HepG2 (cell line): ENCODE measurements at regions of chr17 and their contacts with region 1.

Region 1: DNA sequence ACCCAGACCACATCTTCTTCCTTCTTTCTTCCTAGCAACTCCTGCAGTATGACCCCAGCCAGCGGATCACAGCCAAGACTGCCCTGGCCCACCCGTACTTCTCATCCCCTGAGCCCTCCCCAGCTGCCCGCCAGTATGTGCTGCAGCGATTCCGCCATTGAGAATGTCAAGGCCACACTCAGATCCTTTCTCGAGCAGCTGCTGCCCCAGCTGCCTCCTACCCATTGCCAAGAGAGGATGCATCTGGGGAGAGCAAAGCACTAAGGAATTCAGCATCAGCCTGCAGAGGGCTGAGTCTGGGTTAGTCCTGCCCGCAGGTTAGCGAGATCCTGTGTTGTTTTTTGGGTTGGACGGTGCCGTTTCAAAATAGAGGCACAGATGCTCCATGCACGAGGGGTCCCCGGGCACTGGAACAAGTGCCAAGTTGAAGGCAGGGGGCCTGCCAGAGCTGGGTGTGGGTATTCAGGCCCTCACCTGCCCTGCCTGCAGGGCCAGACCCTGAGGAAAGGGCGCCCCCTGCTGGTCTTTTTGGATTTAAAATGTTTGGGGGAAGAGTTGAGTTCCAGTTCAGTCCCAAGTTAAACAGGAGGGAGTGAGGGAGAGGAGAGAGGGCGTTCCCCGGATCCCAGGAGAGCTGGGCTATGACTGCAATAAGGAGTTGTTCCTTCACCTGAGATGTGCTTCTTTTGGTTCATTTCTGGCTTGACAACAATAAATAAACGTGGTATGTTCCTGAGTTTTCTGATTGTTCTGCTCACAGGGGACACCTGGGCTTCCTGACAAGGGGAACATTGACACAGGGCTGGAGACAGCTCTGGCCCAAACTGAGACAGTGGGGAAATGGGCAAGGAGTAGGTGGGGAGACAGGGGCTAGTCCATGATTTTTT is 4.9 kb downstream of the CDK3 start:
- DNase-seq: peak; percentile 82
- ATAC-seq: peak; percentile 42
- H3K4me3 ChIP-seq: no peak overlapping the region
- H3K27ac ChIP-seq: peak overlapping the region; percentile 83
- H3K4me1 ChIP-seq: peaks cover 55% of the 10 kb centered on the region
- H3K27me3 ChIP-seq: no peaks in the 10 kb centered on the region
- CTCF ChIP-seq: peak; percentile 96
- EP300 ChIP-seq: no peak
- POLR2A ChIP-seq: no peak
- RAD21 ChIP-seq: peak; percentile 97

Region 2: GRCh38 chr17:75872434-75873351 is 132.8 kb before region 1 on chr17:
- CTCF ChIA-PET with region 1: no interaction called
- POLR2A ChIA-PET with region 1: interaction called, 40 read pairs
- in situ Hi-C with region 1: no loop called
- intact Hi-C with region 1: no loop called
- DNase-seq: peak; percentile 99
- ATAC-seq: peak; percentile 64
- H3K4me3 ChIP-seq: peak overlapping the region; percentile 13 to 62 (median 36); a peak in 5 of 6 replicates
- H3K27ac ChIP-seq: peak overlapping the region; percentile 97
- H3K4me1 ChIP-seq: peaks cover 88% of the 10 kb centered on the region
- H3K27me3 ChIP-seq: no peaks in the 10 kb centered on the region
- CTCF ChIP-seq: peak; percentile 43
- EP300 ChIP-seq: peak; percentile 81 to 87; a peak in 3 of 4 replicates
- POLR2A ChIP-seq: peak in 1 of 2 experiments; percentile 84; a peak in 2 of 4 replicates
- RAD21 ChIP-seq: peak; percentile 68

Region 3: GRCh38 chr17:75904749-75905521 is 100.6 kb before region 1 on chr17 and contains the start of gene MRPL38:
- CTCF ChIA-PET with region 1: interaction called, 55 read pairs
- POLR2A ChIA-PET with region 1: interaction called, 95 read pairs
- in situ Hi-C with region 1: loop called (anchors 5 kb)
- intact Hi-C with region 1: no loop called
- DNase-seq: peak; percentile 95
- ATAC-seq: peak; percentile 97
- H3K4me3 ChIP-seq: peak within 1 kb of the TSS; percentile 95 to 100 (median 97)
- H3K27ac ChIP-seq: peak within 1 kb of the TSS; percentile 76
- H3K4me1 ChIP-seq: peaks cover 38% of the 10 kb centered on the region
- H3K27me3 ChIP-seq: no peaks in the 10 kb centered on the region; a peak in 1 of 5 replicates
- CTCF ChIP-seq: peak; percentile 100
- EP300 ChIP-seq: peak in 1 of 2 experiments; percentile 58; a peak in 2 of 4 replicates
- POLR2A ChIP-seq: peak; percentile 75 to 86
- RAD21 ChIP-seq: peak; percentile 100
- total RNA-seq, gene MRPL38: 88.8 and 125 TPM in 2 replicates

Region 4: GRCh38 chr17:75959051-75959838 is 46.3 kb before region 1 on chr17:
- CTCF ChIA-PET with region 1: no interaction called
- POLR2A ChIA-PET with region 1: interaction called, 14 read pairs
- in situ Hi-C with region 1: loop called (anchors 5 kb)
- intact Hi-C with region 1: no loop called
- DNase-seq: peak; percentile 58
- ATAC-seq: peak; percentile 69
- H3K4me3 ChIP-seq: no peak overlapping the region; a peak in 1 of 6 replicates
- H3K27ac ChIP-seq: peak overlapping the region; percentile 52
- H3K4me1 ChIP-seq: peaks cover 37% of the 10 kb centered on the region
- H3K27me3 ChIP-seq: no peaks in the 10 kb centered on the region
- CTCF ChIP-seq: no peak
- EP300 ChIP-seq: peak in 1 of 2 experiments; percentile 58; a peak in 1 of 4 replicates
- POLR2A ChIP-seq: no peak
- RAD21 ChIP-seq: no peak

Region 5: GRCh38 chr17:76027159-76027839 is 21.8 kb after region 1 on chr17 and contains the start of gene EVPL:
- CTCF ChIA-PET with region 1: no interaction called
- POLR2A ChIA-PET with region 1: interaction called, 21 read pairs
- in situ Hi-C with region 1: no loop called
- intact Hi-C with region 1: loop called (anchors 1 kb)
- DNase-seq: peak; percentile 79
- ATAC-seq: peak; percentile 80
- H3K4me3 ChIP-seq: peak within 1 kb of the TSS; percentile 65 to 83 (median 69)
- H3K27ac ChIP-seq: peak within 1 kb of the TSS; percentile 69
- H3K4me1 ChIP-seq: peaks cover 58% of the 10 kb centered on the region
- H3K27me3 ChIP-seq: no peaks in the 10 kb centered on the region; a peak in 1 of 5 replicates
- CTCF ChIP-seq: no peak
- EP300 ChIP-seq: no peak
- POLR2A ChIP-seq: peak; percentile 63 to 76
- RAD21 ChIP-seq: no peak
- total RNA-seq, gene EVPL: 3.6 and 8.2 TPM in 2 replicates